ENCODE measurements at regions of chr17 and their contacts with region 1.

Region 1: DNA sequence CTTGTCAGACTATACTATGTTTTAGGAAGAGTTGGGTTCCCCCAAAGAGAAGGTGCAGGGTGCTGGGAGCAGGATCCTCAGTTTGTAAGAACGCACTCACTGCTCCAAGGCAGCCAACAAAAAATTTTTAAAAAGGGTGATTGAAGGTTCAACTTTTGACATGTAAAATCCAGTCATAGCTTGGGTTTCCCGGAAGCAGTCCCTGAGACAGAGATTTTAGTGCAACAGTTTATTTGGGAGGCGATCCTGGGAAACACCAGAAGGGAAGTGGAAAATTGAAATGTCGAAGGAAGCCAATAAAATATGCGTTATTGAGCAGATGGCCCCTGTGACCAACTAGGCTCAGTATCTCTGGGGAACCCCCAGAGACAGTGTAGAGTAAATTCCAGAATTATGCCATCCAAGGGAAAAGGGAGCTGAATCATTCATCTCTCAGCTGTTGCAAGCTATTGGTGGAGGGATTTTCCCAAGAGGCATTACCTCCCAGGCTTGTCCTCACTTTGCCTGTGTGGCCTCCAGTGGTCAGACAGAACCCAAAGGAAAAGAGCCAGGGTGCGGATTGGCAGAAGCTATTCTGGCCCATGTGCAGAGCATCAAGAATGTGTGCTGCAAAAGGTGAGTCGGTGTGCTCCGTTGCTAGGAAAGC is 72.9 kb downstream of the HS3ST3B1 start:
- DNase-seq: peak; percentile 93
- ATAC-seq: peak; percentile 76
- H3K4me3 ChIP-seq: peak overlapping the region; percentile 55 to 87 (median 68)
- H3K27ac ChIP-seq: peak overlapping the region; percentile 99
- H3K4me1 ChIP-seq: peaks cover 50% of the 10 kb centered on the region
- H3K27me3 ChIP-seq: no peaks in the 10 kb centered on the region; a peak in 1 of 5 replicates
- CTCF ChIP-seq: peak; percentile 34
- EP300 ChIP-seq: peak in 1 of 2 experiments; percentile 76; a peak in 2 of 4 replicates
- POLR2A ChIP-seq: peak; percentile 94 to 98
- RAD21 ChIP-seq: peak; percentile 31

Region 2: GRCh38 chr17:14276535-14277250 is 97.0 kb before region 1 on chr17:
- CTCF ChIA-PET with region 1: no interaction called
- POLR2A ChIA-PET with region 1: interaction called, 14 read pairs
- in situ Hi-C with region 1: no loop called
- intact Hi-C with region 1: no loop called
- DNase-seq: peak; percentile 84
- ATAC-seq: peak; percentile 91
- H3K4me3 ChIP-seq: no peak overlapping the region
- H3K27ac ChIP-seq: peak overlapping the region; percentile 39
- H3K4me1 ChIP-seq: peaks cover 37% of the 10 kb centered on the region
- H3K27me3 ChIP-seq: peaks cover 0 to 8% of the 10 kb centered on the region in 2 experiments; a peak in 3 of 5 replicates
- CTCF ChIP-seq: no peak
- EP300 ChIP-seq: peak in 1 of 2 experiments; percentile 79; a peak in 1 of 4 replicates
- POLR2A ChIP-seq: no peak
- RAD21 ChIP-seq: no peak

Region 3: GRCh38 chr17:14308965-14309879 is 64.5 kb before region 1 on chr17:
- CTCF ChIA-PET with region 1: no interaction called
- POLR2A ChIA-PET with region 1: interaction called, 288 read pairs
- in situ Hi-C with region 1: loop called (anchors 5 kb)
- intact Hi-C with region 1: loop called (anchors 1 kb)
- DNase-seq: peak; percentile 94
- ATAC-seq: peak; percentile 97
- H3K4me3 ChIP-seq: peak overlapping the region; percentile 57 to 92 (median 71)
- H3K27ac ChIP-seq: peak overlapping the region; percentile 93
- H3K4me1 ChIP-seq: peaks cover 47% of the 10 kb centered on the region
- H3K27me3 ChIP-seq: no peaks in the 10 kb centered on the region
- CTCF ChIP-seq: no peak; the same call in 1 of the 2 replicates
- EP300 ChIP-seq: peak in 1 of 2 experiments; percentile 30; a peak in 1 of 4 replicates
- POLR2A ChIP-seq: peak; percentile 64 to 71
- RAD21 ChIP-seq: no peak; the same call in 1 of the 2 replicates

Region 4: GRCh38 chr17:14321476-14321949 is 52.2 kb before region 1 on chr17:
- CTCF ChIA-PET with region 1: no interaction called
- POLR2A ChIA-PET with region 1: interaction called, 45 read pairs
- in situ Hi-C with region 1: no loop called
- intact Hi-C with region 1: loop called (anchors 1 kb)
- DNase-seq: peak; percentile 34
- ATAC-seq: peak; percentile 46
- H3K4me3 ChIP-seq: peak overlapping the region in 1 of 3 experiments; percentile 17; a peak in 1 of 6 replicates
- H3K27ac ChIP-seq: peak overlapping the region; percentile 50
- H3K4me1 ChIP-seq: peaks cover 100% of the 10 kb centered on the region
- H3K27me3 ChIP-seq: no peaks in the 10 kb centered on the region
- CTCF ChIP-seq: no peak
- EP300 ChIP-seq: peak in 1 of 2 experiments; percentile 20; a peak in 1 of 4 replicates
- POLR2A ChIP-seq: no peak
- RAD21 ChIP-seq: no peak

Region 5: DNA sequence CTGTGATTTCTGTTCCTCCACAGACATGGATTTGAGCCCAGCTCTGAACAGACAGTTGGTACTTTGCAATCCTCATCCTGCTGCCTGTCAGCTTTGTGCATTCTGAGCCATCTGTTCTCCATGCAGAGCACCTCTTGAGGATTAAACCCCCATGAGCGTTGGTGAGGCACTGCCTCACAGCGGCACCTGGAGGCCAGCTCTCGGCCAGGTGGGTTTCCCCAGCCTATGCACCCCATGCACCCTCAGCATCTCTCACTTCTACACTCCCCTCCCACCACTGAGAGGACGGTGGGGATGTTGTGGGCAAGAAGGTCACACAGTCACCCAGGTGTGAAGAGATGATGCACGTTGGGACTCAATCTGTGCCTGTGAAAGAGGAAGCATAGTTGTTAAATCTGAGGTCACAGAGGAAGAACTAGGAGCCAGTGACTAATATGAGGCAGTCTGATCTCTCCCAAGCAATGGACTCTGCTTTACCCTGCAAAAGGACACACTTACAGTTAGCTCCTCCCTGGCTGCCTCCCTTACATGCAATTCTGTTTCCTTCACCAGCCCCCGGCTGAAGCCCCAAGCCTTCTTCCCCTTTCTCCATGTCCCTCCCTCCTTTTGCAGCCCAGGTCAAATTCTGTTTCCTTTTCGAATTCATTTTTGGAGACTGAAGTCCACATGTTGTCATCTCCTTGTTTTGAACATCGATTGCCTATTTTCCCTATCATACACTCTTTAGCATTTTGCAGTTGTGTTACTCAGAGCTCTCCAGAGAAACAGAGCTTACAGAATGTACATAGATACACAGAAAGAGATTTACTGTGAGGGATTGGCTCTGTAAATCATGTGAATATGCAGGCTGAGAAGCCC is 14.3 kb before region 1 on chr17:
- CTCF ChIA-PET with region 1: no interaction called
- POLR2A ChIA-PET with region 1: interaction called, 100 read pairs
- in situ Hi-C with region 1: no loop called
- intact Hi-C with region 1: loop called (anchors 1 kb)
- DNase-seq: peak; percentile 52
- ATAC-seq: peak; percentile 64
- H3K4me3 ChIP-seq: peak overlapping the region in 1 of 3 experiments; percentile 17; a peak in 1 of 6 replicates
- H3K27ac ChIP-seq: peak overlapping the region; percentile 61
- H3K4me1 ChIP-seq: peaks cover 63% of the 10 kb centered on the region
- H3K27me3 ChIP-seq: no peaks in the 10 kb centered on the region
- CTCF ChIP-seq: peak; percentile 68
- EP300 ChIP-seq: no peak
- POLR2A ChIP-seq: no peak
- RAD21 ChIP-seq: no peak

Region 6: GRCh38 chr17:14405189-14405588 is 31.5 kb after region 1 on chr17:
- CTCF ChIA-PET with region 1: no interaction called
- POLR2A ChIA-PET with region 1: interaction called, 11 read pairs
- in situ Hi-C with region 1: no loop called
- intact Hi-C with region 1: no loop called
- DNase-seq: no peak
- ATAC-seq: no peak
- H3K4me3 ChIP-seq: no peak overlapping the region
- H3K27ac ChIP-seq: no peak overlapping the region
- H3K4me1 ChIP-seq: peaks cover 25% of the 10 kb centered on the region
- H3K27me3 ChIP-seq: no peaks in the 10 kb centered on the region
- CTCF ChIP-seq: no peak
- EP300 ChIP-seq: no peak
- POLR2A ChIP-seq: no peak
- RAD21 ChIP-seq: no peak